Naive thymus-derived CD4-positive, alpha-beta T cell (primary cell): ENCODE measurements at regions of chr14 and their contacts with region 1.

Region 1: GRCh38 chr14:104752735-104753531 is at the start of gene SIVA1:
- DNase-seq: peak; percentile 98 to 100 (median 99)
- ATAC-seq: peak; percentile 94
- H3K4me3 ChIP-seq: peak within 1 kb of the TSS; percentile 95
- H3K4me3 Mint-ChIP-seq: peak within 1 kb of the TSS; percentile 88 to 97 (median 92)
- H3K27ac ChIP-seq: peak within 1 kb of the TSS; percentile 95
- H3K27ac Mint-ChIP-seq: peak within 1 kb of the TSS; percentile 78 to 94 (median 92)
- H3K4me1 ChIP-seq: peaks cover 14 to 29% of the 10 kb centered on the region in 2 donors
- H3K4me1 Mint-ChIP-seq: peaks cover 19 to 45% (median 36%) of the 10 kb centered on the region in 7 donors
- H3K27me3 ChIP-seq: no peaks in the 10 kb centered on the region
- H3K27me3 Mint-ChIP-seq: no peaks in the 10 kb centered on the region
- total RNA-seq, gene SIVA1: 61.4 to 97.7 (median 77.4) TPM

Region 2: GRCh38 chr14:103628684-103629502 is 1124.0 kb before region 1 on chr14 and contains the start of gene KLC1:
- CTCF ChIA-PET with region 1: no interaction called
- POLR2A ChIA-PET with region 1: no interaction called
- intact Hi-C with region 1: loop called in 1 of 2 experiments (anchors 5 kb)
- DNase-seq: peak; percentile 71 to 93 (median 84)
- ATAC-seq: peak; percentile 87
- H3K4me3 ChIP-seq: peak within 1 kb of the TSS; percentile 78
- H3K4me3 Mint-ChIP-seq: peak within 1 kb of the TSS; percentile 74 to 91 (median 88)
- H3K27ac ChIP-seq: peak within 1 kb of the TSS; percentile 98
- H3K27ac Mint-ChIP-seq: peak within 1 kb of the TSS; percentile 60 to 93 (median 88)
- H3K4me1 ChIP-seq: peaks cover 18 to 29% of the 10 kb centered on the region in 2 donors
- H3K4me1 Mint-ChIP-seq: peaks cover 23 to 64% (median 38%) of the 10 kb centered on the region in 7 donors
- H3K27me3 ChIP-seq: no peaks in the 10 kb centered on the region
- H3K27me3 Mint-ChIP-seq: no peaks in the 10 kb centered on the region
- total RNA-seq, gene KLC1: 150 to 268 (median 174) TPM

Region 3: GRCh38 chr14:104604459-104605449 is 148.2 kb before region 1 on chr14 and contains the start of gene TMEM179:
- CTCF ChIA-PET with region 1: no interaction called
- POLR2A ChIA-PET with region 1: no interaction called
- intact Hi-C with region 1: no loop called
- DNase-seq: peak in 1 of 9 donors; percentile 34
- ATAC-seq: no peak
- H3K4me3 ChIP-seq: no peak within 1 kb of the TSS
- H3K4me3 Mint-ChIP-seq: peak within 1 kb of the TSS in 2 of 10 donors; percentile 14 to 74
- H3K27ac ChIP-seq: no peak within 1 kb of the TSS
- H3K27ac Mint-ChIP-seq: no peak within 1 kb of the TSS
- H3K4me1 ChIP-seq: no peaks in the 10 kb centered on the region
- H3K4me1 Mint-ChIP-seq: peaks cover 0 to 8% (median 4%) of the 10 kb centered on the region in 7 donors
- H3K27me3 ChIP-seq: no peaks in the 10 kb centered on the region
- H3K27me3 Mint-ChIP-seq: peaks cover 37 to 71% (median 64%) of the 10 kb centered on the region in 5 donors
- total RNA-seq, gene TMEM179: 0.15 TPM in 1 of 5 experiments, not detected in the others

Region 4: DNA sequence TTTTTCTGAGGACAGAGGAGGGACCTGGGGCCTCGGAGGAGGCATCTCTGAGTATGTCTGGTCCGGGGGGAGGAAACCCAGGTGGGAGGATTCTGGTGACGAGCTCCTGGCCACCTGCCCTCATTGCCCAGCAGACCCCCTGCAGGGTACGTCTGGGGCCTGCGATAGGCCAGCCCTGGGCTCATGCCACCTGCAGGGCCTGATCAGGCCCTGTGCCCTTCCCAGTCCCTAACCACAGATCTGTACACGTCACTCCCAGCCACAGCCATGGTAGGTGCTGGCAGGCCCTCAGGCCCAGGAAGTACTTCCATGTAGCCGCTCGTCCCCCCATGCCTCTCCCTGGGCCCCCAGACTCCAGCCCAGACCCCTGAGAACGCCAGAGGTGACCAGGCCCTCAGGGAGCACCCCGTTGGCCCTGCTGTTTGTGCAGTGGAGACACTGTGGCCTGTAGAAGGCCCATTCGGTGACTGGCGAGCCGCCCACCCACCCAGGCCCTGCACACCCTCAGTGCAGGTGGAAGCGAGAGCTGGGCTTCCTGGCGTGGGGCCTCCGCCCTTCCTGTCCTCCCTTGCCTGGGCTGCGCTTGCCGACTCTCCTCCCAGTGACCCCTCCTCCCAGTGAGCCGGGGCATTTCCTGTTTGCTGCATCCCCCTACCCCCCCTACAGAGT is 57.8 kb before region 1 on chr14:
- CTCF ChIA-PET with region 1: interaction called, 3 read pairs
- POLR2A ChIA-PET with region 1: interaction called, 4 read pairs
- intact Hi-C with region 1: loop called in 1 of 2 experiments (anchors 1 kb)
- DNase-seq: peak in 8 of 9 donors; percentile 46 to 65 (median 59)
- ATAC-seq: peak; percentile 71
- H3K4me3 ChIP-seq: peak overlapping the region; percentile 47
- H3K4me3 Mint-ChIP-seq: peak overlapping the region; percentile 61 to 80 (median 76)
- H3K27ac ChIP-seq: peak overlapping the region; percentile 70
- H3K27ac Mint-ChIP-seq: peak overlapping the region; percentile 89 to 97 (median 93)
- H3K4me1 ChIP-seq: peaks cover 21 to 50% of the 10 kb centered on the region in 2 donors
- H3K4me1 Mint-ChIP-seq: peaks cover 8 to 49% (median 34%) of the 10 kb centered on the region in 7 donors
- H3K27me3 ChIP-seq: no peaks in the 10 kb centered on the region
- H3K27me3 Mint-ChIP-seq: no peaks in the 10 kb centered on the region

Region 5: DNA sequence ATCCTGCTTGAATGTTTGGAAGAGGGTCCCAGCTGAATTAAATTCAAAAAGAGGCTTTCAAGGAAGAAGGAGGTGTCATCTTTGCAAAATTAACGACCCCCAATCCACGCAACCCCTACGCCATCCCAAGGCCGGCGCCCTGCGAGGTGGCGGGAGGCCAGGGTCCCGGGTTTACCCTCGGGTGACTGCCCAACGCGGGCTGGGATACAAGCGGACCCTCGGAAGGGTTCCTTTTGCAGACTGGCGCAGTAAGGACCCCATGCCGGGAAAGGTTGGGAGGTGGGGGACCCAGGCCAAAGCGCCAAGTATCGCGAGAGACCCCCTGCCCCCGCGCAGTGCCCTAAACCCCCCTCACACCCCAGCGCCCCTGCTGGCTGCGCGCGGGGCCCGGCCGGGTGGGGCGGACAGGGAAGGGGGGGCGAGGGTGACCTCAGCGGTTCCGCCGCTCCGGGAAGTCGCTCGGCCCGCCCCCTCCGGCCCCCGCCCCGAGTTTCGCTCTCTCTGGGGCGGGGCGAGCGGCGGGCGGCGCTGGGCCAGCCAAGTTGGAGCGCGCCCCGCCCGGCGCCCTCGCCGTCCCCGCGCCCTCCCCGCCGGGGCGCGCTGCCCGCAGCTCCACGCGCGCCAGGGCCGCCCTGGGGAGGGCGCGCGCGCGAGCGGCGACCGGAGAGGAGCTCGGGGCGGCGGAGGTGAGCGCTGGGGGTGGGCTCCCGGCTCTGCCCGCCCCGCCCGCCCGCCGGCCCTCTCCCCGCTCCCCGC is 47.3 kb after region 1 on chr14:
- CTCF ChIA-PET with region 1: no interaction called
- POLR2A ChIA-PET with region 1: interaction called, 24 read pairs
- intact Hi-C with region 1: loop called (anchors 1 kb)
- DNase-seq: peak in 8 of 9 donors; percentile 55 to 85 (median 68)
- ATAC-seq: peak; percentile 82
- H3K4me3 ChIP-seq: peak overlapping the region; percentile 41
- H3K4me3 Mint-ChIP-seq: peak overlapping the region; percentile 59 to 90 (median 73)
- H3K27ac ChIP-seq: peak overlapping the region; percentile 70
- H3K27ac Mint-ChIP-seq: peak overlapping the region; percentile 32 to 94 (median 88)
- H3K4me1 ChIP-seq: peaks cover 20 to 27% of the 10 kb centered on the region in 2 donors
- H3K4me1 Mint-ChIP-seq: peaks cover 16 to 47% (median 32%) of the 10 kb centered on the region in 7 donors
- H3K27me3 ChIP-seq: no peaks in the 10 kb centered on the region
- H3K27me3 Mint-ChIP-seq: peaks cover 0 to 2% (median 0%) of the 10 kb centered on the region in 5 donors

Region 6: DNA sequence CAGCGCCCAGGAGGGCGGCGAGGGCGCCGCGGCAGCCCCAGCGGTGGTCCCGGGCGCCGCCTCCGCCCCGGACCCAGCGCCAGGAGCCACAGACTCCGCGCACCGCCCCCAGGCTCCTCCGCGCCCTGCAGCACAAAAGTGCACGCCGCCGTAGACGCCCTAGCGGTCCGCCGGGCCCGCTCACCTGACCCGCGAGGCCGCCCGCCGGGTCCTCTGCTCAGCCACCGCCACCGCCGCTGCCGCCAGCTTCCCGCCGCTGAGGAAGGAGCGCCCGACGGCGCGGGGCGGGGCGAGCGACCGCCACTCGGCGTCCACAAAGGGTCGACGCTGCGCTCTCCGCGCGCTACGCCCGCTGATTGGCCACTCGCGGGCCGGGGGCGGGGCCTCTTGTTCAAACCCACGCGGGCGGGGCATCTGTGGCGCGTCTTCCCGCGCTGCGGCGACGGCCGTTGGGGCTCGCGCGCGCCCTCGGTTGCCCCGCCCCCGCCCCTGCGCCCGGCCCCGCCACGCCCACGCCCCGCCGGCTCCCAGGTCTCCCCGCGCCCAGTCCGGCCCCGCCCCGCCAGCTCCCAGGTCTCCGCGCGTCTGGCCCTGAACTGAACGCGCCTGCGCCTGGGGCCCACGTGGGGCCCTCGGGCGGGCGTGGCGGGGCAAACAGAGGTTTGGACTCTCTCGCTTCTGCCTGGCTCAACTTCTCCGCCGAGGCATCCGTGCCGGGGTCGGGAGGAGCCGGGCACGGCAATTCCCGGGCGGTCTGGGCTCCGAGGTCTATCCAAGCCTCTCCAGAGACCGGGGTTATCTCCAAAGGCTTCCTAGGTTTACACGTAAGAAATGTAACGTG is 268.1 kb after region 1 on chr14 and contains the start of gene CDCA4:
- CTCF ChIA-PET with region 1: no interaction called
- POLR2A ChIA-PET with region 1: interaction called, 5 read pairs
- intact Hi-C with region 1: loop called in 1 of 2 experiments (anchors 1 kb)
- DNase-seq: peak; percentile 93 to 98 (median 97)
- ATAC-seq: peak; percentile 91
- H3K4me3 ChIP-seq: peak within 1 kb of the TSS; percentile 97
- H3K4me3 Mint-ChIP-seq: peak within 1 kb of the TSS; percentile 88 to 99 (median 92)
- H3K27ac ChIP-seq: peak within 1 kb of the TSS; percentile 94
- H3K27ac Mint-ChIP-seq: peak within 1 kb of the TSS; percentile 81 to 97 (median 92)
- H3K4me1 ChIP-seq: peaks cover 25 to 54% of the 10 kb centered on the region in 2 donors
- H3K4me1 Mint-ChIP-seq: peaks cover 38 to 62% (median 41%) of the 10 kb centered on the region in 7 donors
- H3K27me3 ChIP-seq: no peaks in the 10 kb centered on the region
- H3K27me3 Mint-ChIP-seq: no peaks in the 10 kb centered on the region
- total RNA-seq, gene CDCA4: 12.7 to 47.8 (median 14.0) TPM

Region 7: GRCh38 chr14:105300792-105301533 is 548.0 kb after region 1 on chr14 and contains the start of gene BRF1:
- CTCF ChIA-PET with region 1: no interaction called
- POLR2A ChIA-PET with region 1: interaction called, 5 read pairs
- intact Hi-C with region 1: loop called (anchors 2 to 5 kb)
- DNase-seq: peak; percentile 94 to 100 (median 99)
- ATAC-seq: peak; percentile 93
- H3K4me3 ChIP-seq: peak within 1 kb of the TSS; percentile 73
- H3K4me3 Mint-ChIP-seq: peak within 1 kb of the TSS; percentile 75 to 95 (median 90)
- H3K27ac ChIP-seq: peak within 1 kb of the TSS; percentile 94
- H3K27ac Mint-ChIP-seq: peak within 1 kb of the TSS; percentile 86 to 97 (median 94)
- H3K4me1 ChIP-seq: peaks cover 0 to 22% of the 10 kb centered on the region in 2 donors
- H3K4me1 Mint-ChIP-seq: peaks cover 34 to 52% (median 40%) of the 10 kb centered on the region in 7 donors
- H3K27me3 ChIP-seq: no peaks in the 10 kb centered on the region
- H3K27me3 Mint-ChIP-seq: no peaks in the 10 kb centered on the region
- total RNA-seq, gene BRF1: 49.8 to 75.7 (median 61.4) TPM